Common myeloid progenitor, CD34-positive (primary cell): ENCODE measurements at regions of chr9 and their contacts with region 1.

Region 1: GRCh38 chr9:121213136-121213806 is 11.6 kb upstream of the RAB14 start:
- DNase-seq: peak; percentile 70 to 72 (median 70)
- H3K4me3 ChIP-seq: peak overlapping the region in 1 of 7 experiments; percentile 9
- H3K27ac ChIP-seq: no peak overlapping the region
- H3K4me1 ChIP-seq: peaks cover 8 to 25% (median 19%) of the 10 kb centered on the region in 4 experiments
- H3K27me3 ChIP-seq: no peaks in the 10 kb centered on the region

Region 2: DNA sequence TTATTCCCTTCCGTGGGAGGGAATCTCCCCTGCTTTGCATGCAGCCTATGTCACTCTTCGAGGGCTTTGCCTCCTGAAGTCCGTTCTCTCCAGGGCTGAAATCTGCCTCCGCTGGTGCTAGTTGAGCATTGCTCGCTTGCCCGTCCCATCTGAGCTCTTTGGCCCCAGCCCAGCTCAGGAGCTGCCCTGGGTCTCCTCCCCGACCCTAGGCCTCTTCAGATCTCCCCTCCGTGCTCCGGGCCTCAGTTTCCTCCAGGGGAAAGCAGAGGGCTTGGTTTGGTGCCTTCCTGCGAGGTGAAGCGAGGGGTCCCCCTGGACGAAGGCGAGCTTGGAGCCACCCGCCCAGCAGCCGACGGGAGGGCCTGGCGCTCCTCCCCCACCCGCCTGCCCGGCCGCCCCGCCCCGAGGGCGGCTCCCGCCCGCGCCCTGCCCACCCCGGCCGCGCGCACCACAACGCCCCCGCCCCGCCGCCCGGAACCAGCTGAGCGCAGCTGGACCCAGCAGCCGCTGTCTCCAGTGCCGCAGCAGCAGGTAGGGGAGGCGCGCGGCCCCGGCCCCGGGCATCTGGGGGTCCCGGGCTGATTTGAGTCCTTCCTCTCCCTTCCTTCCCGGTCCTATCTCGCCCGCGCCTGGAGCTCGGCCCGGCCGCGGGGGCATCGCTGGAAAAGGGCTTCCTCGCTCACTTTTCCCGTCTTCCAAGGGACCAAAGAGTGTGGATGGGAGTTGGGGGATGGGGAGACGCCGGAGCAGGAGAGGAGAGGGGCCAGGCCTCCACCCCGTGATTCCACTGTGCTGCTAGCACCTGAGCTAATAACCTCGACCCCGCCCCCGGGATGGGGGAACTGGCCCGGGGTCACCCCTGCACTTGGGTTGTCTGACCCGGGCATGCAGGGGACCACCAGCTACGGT is 54.7 kb after region 1 on chr9 and contains the start of gene GSN:
- CTCF ChIA-PET with region 1: interaction called, 82 read pairs
- POLR2A ChIA-PET with region 1: interaction called, 3 read pairs
- DNase-seq: peak in 2 of 3 donors; percentile 51 to 76
- H3K4me3 ChIP-seq: peak within 1 kb of the TSS; percentile 70 to 85 (median 78)
- H3K27ac ChIP-seq: peak within 1 kb of the TSS in 1 of 2 experiments; percentile 4
- H3K4me1 ChIP-seq: peaks cover 23 to 64% (median 56%) of the 10 kb centered on the region in 4 experiments
- H3K27me3 ChIP-seq: no peaks in the 10 kb centered on the region

Region 3: DNA sequence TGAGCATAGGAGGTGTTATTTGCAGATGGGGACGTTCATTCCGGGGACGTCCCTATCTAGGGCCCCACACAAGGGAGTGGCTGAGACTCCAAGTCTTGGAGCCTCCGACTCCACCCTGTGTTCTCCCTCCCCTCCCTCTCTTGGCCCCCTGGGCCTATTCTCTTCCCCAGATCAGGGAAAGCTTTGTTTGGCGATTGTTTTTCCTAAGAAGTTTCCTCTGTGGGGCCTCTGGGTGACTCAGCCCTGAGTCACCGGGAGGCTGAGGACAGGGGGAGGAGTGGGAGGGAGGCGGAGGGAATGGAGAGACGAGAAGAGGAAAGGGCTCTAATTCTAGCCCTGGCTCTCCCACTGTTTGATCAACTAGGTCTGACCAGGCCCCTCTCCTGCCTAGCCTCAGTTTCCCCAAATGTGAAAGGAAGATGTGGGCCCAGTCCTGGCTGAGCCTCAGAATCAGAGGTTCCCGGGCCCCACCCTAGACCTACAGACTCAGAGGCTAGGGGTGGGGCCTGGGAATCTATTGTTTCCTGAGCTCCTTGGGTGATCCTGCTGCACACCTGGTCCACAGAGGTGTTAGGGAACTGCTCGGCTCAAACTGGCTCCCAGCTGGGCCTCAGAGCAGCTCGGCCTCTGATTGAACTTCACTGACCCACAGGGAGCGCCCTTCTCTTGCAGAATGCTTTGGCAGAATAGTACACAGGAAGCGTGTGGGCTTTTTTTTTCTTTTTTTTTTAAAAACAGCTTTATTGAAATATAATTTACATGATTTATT is 73.9 kb after region 1 on chr9:
- CTCF ChIA-PET with region 1: interaction called, 54 read pairs
- POLR2A ChIA-PET with region 1: no interaction called
- DNase-seq: peak; percentile 74 to 81 (median 81)
- H3K4me3 ChIP-seq: peak overlapping the region in 4 of 7 experiments; percentile 14 to 61 (median 34)
- H3K27ac ChIP-seq: peak overlapping the region in 1 of 2 experiments; percentile 79
- H3K4me1 ChIP-seq: peaks cover 14 to 81% (median 80%) of the 10 kb centered on the region in 4 experiments
- H3K27me3 ChIP-seq: no peaks in the 10 kb centered on the region

Region 4: DNA sequence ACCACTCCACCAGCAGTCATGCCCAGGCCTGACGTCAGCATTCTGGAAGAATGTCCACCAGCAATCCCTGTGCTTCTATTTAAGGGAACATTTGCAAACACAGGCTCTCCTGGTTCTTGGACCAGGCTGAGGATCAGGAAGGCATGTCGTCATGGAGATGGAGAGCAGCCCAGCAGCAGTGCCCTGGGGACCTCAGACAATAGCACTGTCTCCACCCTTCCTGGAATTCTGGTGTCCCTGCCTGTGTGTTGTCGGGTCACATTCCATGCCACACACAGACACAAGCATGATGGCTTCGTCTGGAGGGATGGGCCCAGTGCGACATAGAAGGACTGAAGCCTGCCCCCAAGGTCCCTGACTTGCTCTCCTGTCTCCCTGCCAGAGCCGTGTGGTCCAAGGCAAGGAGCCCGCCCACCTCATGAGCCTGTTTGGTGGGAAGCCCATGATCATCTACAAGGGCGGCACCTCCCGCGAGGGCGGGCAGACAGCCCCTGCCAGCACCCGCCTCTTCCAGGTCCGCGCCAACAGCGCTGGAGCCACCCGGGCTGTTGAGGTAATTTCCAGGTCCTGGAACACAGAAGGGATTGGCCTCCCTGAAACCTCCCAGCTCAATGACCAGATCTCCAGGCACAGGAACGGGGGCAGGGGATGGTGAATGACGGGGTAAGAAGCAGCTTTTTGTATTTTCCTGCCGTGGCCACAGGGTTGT is 113.0 kb after region 1 on chr9:
- CTCF ChIA-PET with region 1: interaction called, 119 read pairs
- POLR2A ChIA-PET with region 1: no interaction called
- DNase-seq: no peak
- H3K4me3 ChIP-seq: no peak overlapping the region
- H3K27ac ChIP-seq: no peak overlapping the region
- H3K4me1 ChIP-seq: peaks cover 0 to 7% (median 4%) of the 10 kb centered on the region in 4 experiments
- H3K27me3 ChIP-seq: no peaks in the 10 kb centered on the region